Activated B cell treated with CpG ODN at 0.5 μM for 24 hours (primary cell): ENCODE measurements at regions of chr10 and their contacts with region 1.

Region 1: DNA sequence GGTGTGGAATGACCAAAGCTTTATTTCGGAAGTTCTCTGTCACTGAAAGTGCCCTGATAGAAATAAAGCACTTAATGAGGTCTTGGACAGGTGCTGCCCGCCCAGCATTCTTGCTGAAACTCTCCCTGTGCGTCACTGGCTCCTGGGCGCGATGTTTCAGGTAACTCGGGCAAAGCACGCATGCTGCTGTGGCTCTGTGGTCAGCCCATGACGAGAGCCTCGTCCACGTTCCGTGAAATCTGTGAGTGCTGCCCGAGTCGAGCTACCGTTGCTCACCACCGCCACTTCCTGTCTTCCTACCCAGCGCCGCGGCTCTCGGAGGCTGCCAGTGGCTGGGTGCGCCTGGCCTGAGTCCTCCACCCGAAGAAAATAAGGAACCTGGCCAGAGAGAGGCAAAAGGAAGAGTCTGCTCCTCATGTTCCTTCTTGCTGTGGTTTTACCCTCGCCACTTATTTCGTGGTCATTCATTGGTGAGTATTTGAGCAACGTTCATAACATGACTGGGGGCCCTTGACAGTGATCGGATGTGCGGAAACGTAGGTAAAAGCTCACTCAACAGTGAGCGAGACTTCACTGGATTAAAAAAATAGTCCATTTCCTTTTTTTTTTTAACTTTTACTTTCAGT is 95.5 kb downstream of the MAP3K8 start:
- DNase-seq: peak; percentile 78
- ATAC-seq: peak; percentile 84
- H3K4me3 Mint-ChIP-seq: peak overlapping the region; percentile 86
- H3K27ac Mint-ChIP-seq: peak overlapping the region; percentile 98
- H3K4me1 Mint-ChIP-seq: peaks cover 76% of the 10 kb centered on the region
- H3K27me3 Mint-ChIP-seq: no peaks in the 10 kb centered on the region
- CTCF ChIP-seq: no peak

Region 2: GRCh38 chr10:30309401-30309800 is 220.1 kb before region 1 on chr10:
- CTCF ChIA-PET with region 1: no interaction called
- POLR2A ChIA-PET with region 1: no interaction called
- intact Hi-C with region 1: no loop called
- DNase-seq: no peak
- ATAC-seq: no peak
- H3K4me3 Mint-ChIP-seq: no peak overlapping the region
- H3K27ac Mint-ChIP-seq: no peak overlapping the region
- H3K4me1 Mint-ChIP-seq: no peaks in the 10 kb centered on the region
- H3K27me3 Mint-ChIP-seq: no peaks in the 10 kb centered on the region
- CTCF ChIP-seq: no peak

Region 3: DNA sequence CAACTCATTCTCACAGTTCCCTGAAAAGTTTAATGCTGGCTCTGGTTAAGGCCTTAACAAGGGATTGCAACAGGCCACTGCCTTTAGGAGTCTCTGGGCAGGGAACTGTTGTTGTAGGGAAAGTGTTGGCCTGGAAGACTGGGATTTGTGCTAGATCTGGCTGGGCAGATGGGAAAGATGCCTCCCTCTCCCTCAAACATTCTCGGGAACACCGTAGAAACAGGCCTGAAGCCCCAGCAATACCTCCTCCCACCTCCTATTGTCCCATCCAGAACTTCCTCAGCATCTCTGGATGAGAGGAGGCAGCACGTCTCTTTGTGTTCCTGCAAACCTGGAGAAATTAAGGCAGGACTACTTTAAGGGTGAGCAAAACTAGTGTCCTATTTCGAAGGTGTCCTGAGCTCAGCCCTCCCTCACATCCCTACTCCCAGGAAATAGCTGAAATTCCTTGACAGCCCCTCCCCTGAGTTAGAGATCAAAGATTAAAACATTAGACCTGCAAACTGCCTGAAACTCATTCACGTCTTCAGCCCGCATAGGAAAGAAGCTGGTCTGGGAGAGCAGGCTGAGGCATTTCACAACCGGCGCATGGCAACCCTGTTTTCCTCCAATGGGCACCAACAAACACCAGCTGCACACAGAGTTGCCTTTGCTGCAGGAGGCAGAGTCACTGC is 106.4 kb before region 1 on chr10:
- CTCF ChIA-PET with region 1: interaction called, 4 read pairs
- POLR2A ChIA-PET with region 1: interaction called, 24 read pairs
- intact Hi-C with region 1: loop called (anchors 1 kb)
- DNase-seq: no peak
- ATAC-seq: peak; percentile 11
- H3K4me3 Mint-ChIP-seq: peak overlapping the region; percentile 61
- H3K27ac Mint-ChIP-seq: peak overlapping the region; percentile 84
- H3K4me1 Mint-ChIP-seq: peaks cover 90% of the 10 kb centered on the region
- H3K27me3 Mint-ChIP-seq: no peaks in the 10 kb centered on the region
- CTCF ChIP-seq: no peak

Region 4: DNA sequence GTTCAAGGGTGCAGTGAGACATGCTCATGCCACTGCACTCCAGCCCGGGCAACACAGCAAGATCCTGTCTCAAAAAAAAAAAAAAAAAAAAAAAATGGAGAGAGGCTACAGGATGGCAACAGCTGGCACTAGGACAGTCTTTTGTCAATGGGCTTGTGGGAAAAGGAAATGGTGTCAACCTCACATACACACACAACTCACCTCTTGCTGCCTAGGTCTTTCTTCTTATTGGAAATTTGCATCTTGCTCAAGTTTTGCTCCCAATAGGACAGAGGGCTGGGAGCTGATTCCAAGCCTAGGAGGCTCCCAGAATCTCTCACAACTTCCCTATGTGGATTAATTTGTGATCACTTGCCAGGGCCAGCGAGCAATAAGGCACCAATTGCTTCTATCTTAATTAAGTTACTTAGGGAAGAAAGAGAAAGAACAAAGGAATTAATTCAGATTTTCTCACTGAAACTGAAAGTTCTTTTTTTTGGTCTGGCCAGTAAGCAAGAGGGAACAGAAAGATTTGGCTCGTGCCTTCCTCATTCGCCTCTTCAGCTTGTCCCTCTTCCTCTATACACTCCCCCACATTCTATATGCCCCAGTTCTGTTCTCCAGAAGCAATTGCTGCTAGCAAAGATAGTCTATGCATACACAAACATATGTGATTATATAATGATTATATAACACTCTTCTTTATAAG is 61.7 kb before region 1 on chr10:
- CTCF ChIA-PET with region 1: interaction called, 3 read pairs
- POLR2A ChIA-PET with region 1: interaction called, 9 read pairs
- intact Hi-C with region 1: loop called (anchors 2 kb)
- DNase-seq: no peak
- ATAC-seq: peak; percentile 84
- H3K4me3 Mint-ChIP-seq: peak overlapping the region; percentile 56
- H3K27ac Mint-ChIP-seq: peak overlapping the region; percentile 74
- H3K4me1 Mint-ChIP-seq: peaks cover 35% of the 10 kb centered on the region
- H3K27me3 Mint-ChIP-seq: no peaks in the 10 kb centered on the region
- CTCF ChIP-seq: no peak

Region 5: GRCh38 chr10:30493609-30494530 is 35.6 kb before region 1 on chr10:
- CTCF ChIA-PET with region 1: interaction called, 6 read pairs
- POLR2A ChIA-PET with region 1: interaction called, 23 read pairs
- intact Hi-C with region 1: loop called (anchors 1 kb)
- DNase-seq: no peak
- ATAC-seq: peak; percentile 53
- H3K4me3 Mint-ChIP-seq: peak overlapping the region; percentile 70
- H3K27ac Mint-ChIP-seq: peak overlapping the region; percentile 84
- H3K4me1 Mint-ChIP-seq: peaks cover 98% of the 10 kb centered on the region
- H3K27me3 Mint-ChIP-seq: no peaks in the 10 kb centered on the region
- CTCF ChIP-seq: no peak

Region 6: GRCh38 chr10:30510169-30510930 is 19.1 kb before region 1 on chr10:
- CTCF ChIA-PET with region 1: interaction called, 4 read pairs
- POLR2A ChIA-PET with region 1: interaction called, 21 read pairs
- intact Hi-C with region 1: loop called (anchors 1 kb)
- DNase-seq: no peak
- ATAC-seq: peak; percentile 96
- H3K4me3 Mint-ChIP-seq: peak overlapping the region; percentile 56
- H3K27ac Mint-ChIP-seq: peak overlapping the region; percentile 81
- H3K4me1 Mint-ChIP-seq: peaks cover 42% of the 10 kb centered on the region
- H3K27me3 Mint-ChIP-seq: no peaks in the 10 kb centered on the region
- CTCF ChIP-seq: no peak